ENCODE measurements at regions of chr3 and their contacts with region 1.

Region 1: DNA sequence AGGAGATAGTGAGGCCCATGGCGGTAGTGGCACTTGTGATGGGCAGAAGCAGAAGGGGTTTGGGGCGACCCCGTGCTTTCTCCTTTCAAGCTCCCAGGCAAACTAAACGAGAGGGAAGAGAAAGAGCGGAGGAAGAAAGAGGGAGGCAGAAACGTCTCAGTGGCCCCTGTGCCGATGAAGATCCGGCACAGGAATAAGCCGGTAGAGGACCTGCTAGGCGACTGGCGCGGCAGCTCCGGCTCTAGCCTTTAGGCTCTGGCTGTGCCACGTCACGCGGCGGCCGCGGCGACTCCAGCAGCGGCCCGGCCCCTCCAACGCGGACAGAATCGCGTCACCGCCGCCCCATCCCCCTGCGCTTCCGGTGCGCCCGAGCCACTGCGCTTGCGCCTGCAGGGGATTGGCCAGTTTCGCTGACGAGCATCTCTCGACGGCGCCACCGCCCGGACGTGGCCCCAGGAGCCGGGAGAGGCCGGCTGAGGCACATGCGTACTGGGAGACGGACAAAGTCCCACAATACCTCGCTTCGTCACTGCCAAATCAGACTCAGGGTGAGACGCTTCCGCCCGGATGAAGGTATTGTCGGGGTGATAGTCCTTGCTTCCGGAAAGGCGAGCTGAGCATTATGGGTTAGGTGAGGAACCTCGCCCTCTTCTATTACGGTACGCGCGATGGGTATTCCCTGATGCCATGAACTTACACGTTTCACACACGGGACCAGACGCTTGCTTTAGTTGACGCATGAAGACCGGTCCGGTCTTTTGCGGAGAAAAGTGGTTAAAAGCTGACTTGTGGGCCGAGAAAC is at the start of gene ARF4:
- DNase-seq: peak; percentile 99
- H3K4me3 ChIP-seq: peak within 1 kb of the TSS; percentile 90
- H3K27ac ChIP-seq: peak within 1 kb of the TSS; percentile 74
- H3K4me1 ChIP-seq: peaks cover 32% of the 10 kb centered on the region
- CTCF ChIP-seq: peak; percentile 43; the same call in 1 of the 2 replicates
- total RNA-seq, gene ARF4: 26.6 and 34.9 TPM in 2 replicates

Region 2: DNA sequence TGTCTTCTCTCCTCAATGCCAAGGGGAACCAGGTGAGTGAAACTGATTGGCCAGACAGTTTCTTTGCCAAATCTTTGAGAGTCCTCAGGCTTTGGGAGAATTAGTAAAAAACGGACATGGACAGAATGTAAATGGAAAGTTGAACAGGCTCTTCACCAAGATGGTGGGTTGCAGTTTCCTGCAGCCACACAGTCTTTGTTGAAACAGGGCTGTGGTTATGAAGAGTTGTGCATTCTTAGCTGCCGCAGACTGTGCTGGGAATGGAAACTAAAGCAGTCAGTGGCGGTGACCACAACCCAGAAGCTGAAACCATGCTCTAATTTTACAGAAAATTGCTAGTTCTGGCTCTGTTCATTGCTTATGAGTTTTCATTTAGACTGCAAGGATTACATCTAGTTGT is 872.1 kb before region 1 on chr3:
- CTCF ChIA-PET with region 1: no interaction called
- POLR2A ChIA-PET with region 1: no interaction called
- intact Hi-C with region 1: no loop called
- DNase-seq: no peak
- H3K4me3 ChIP-seq: no peak overlapping the region
- H3K27ac ChIP-seq: no peak overlapping the region
- H3K4me1 ChIP-seq: no peaks in the 10 kb centered on the region
- CTCF ChIP-seq: no peak

Region 3: DNA sequence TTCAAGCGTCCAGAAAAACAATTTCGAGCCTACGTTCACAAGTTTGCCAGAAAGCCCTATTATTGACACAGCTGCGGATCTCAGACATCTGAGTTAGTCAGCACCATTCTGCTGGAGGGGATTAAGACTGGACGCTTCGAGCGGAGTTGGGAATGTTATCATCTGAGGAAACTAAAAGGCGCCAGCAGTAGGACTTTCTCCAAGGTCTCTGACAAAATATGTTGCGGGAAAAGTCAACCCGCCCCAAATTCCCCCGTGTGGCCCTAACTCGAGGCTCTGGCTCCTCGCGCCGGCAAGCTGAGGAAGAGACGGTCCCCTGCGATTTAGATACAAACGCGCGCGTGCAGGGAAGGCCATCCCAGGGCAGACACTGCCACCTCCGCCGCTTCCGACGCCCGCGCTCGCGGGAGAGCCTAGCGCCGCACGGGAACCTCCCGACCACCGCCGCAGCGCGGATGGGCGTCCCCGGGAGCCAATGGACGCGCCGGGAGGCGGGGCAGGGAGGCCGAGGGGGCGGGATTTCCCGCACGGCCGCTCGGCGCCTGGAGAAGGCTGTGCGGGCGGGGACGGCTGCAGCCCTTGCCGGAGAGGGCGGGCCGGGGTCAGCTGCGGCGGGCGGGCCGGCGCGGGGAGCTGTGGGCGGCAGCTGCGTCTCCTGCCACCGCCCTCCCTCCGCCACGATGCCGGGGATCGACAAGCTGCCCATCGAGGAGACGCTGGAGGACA is 370.0 kb before region 1 on chr3 and contains the start of gene APPL1:
- CTCF ChIA-PET with region 1: no interaction called
- POLR2A ChIA-PET with region 1: no interaction called
- intact Hi-C with region 1: loop called (anchors 2 kb)
- DNase-seq: peak; percentile 95
- H3K4me3 ChIP-seq: peak within 1 kb of the TSS; percentile 90
- H3K27ac ChIP-seq: peak within 1 kb of the TSS; percentile 44
- H3K4me1 ChIP-seq: peaks cover 36% of the 10 kb centered on the region
- CTCF ChIP-seq: no peak
- total RNA-seq, gene APPL1: 43.3 and 45.9 TPM in 2 replicates

Region 4: GRCh38 chr3:57555738-57556458 is 41.4 kb before region 1 on chr3 and contains the start of gene PDE12:
- CTCF ChIA-PET with region 1: no interaction called
- POLR2A ChIA-PET with region 1: interaction called, 7 read pairs
- intact Hi-C with region 1: loop called (anchors 1 kb)
- DNase-seq: peak; percentile 95
- H3K4me3 ChIP-seq: peak within 1 kb of the TSS; percentile 78
- H3K27ac ChIP-seq: peak within 1 kb of the TSS; percentile 77
- H3K4me1 ChIP-seq: peaks cover 31% of the 10 kb centered on the region
- CTCF ChIP-seq: no peak
- total RNA-seq, gene PDE12: 15.2 and 19.3 TPM in 2 replicates

Region 5: GRCh38 chr3:57692259-57693147 is 95.2 kb after region 1 on chr3 and contains the start of gene DENND6A:
- CTCF ChIA-PET with region 1: no interaction called
- POLR2A ChIA-PET with region 1: interaction called, 6 read pairs
- intact Hi-C with region 1: loop called (anchors 1 kb)
- DNase-seq: peak; percentile 97
- H3K4me3 ChIP-seq: peak within 1 kb of the TSS; percentile 91
- H3K27ac ChIP-seq: peak within 1 kb of the TSS; percentile 60
- H3K4me1 ChIP-seq: peaks cover 31% of the 10 kb centered on the region
- CTCF ChIP-seq: no peak
- total RNA-seq, gene DENND6A: 15.9 and 25.5 TPM in 2 replicates

Region 6: DNA sequence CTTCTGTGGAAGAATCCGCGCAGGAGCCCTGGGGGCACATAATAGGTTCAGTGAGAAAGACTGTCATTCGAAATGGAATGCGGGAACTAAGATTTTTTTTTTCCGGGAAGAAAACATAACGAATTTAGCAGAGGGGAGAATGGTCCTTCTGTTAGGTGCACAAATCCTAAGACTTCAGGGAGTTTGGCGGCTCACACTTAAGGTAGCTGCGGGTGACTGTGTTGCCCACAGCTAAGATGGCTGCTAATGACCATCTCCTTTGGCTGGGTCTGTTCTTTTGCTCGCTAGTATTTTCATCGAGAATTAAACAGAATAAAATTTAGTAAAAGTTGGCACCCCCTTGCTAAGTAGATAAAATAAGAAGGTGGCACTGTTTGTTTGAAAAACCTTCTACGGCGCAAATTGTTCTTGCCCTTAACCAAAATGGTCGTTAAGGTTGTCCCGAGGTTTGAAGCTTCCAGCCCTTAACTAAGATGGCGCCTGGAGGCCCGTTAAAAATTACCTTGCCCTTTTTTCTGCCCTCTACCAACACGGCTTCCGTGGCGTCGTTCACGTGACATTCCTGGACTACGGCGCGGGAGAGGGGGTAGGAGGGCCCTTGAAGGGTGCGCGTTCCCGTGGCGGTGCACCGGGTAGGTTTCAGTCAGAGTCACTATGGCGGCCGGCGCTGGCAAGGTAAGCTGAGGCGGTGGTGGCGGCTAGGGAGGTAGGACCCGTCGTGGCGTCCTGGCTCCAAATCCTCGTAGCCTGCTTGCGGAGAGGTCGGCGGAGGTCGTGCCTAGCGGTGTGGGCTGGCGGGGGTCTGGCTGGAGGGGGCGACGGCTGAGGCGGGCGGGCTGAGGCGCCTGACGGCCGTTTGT is 158.6 kb after region 1 on chr3 and contains the start of gene SLMAP:
- CTCF ChIA-PET with region 1: no interaction called
- POLR2A ChIA-PET with region 1: interaction called, 7 read pairs
- intact Hi-C with region 1: loop called (anchors 1 kb)
- DNase-seq: peak; percentile 97
- H3K4me3 ChIP-seq: peak within 1 kb of the TSS; percentile 80
- H3K27ac ChIP-seq: peak within 1 kb of the TSS; percentile 64
- H3K4me1 ChIP-seq: peaks cover 35% of the 10 kb centered on the region
- CTCF ChIP-seq: 0 out of 2 replicates have a peak, but pooled peaks have one; percentile 2
- total RNA-seq, gene SLMAP: 39.1 and 41.6 TPM in 2 replicates

Region 7: GRCh38 chr3:57770009-57770827 is 172.9 kb after region 1 on chr3:
- CTCF ChIA-PET with region 1: no interaction called
- POLR2A ChIA-PET with region 1: no interaction called
- intact Hi-C with region 1: no loop called
- DNase-seq: no peak
- H3K4me3 ChIP-seq: no peak overlapping the region
- H3K27ac ChIP-seq: no peak overlapping the region
- H3K4me1 ChIP-seq: no peaks in the 10 kb centered on the region
- CTCF ChIP-seq: no peak